ENCODE measurements at regions of chr1 and their contacts with region 1.

Region 1: DNA sequence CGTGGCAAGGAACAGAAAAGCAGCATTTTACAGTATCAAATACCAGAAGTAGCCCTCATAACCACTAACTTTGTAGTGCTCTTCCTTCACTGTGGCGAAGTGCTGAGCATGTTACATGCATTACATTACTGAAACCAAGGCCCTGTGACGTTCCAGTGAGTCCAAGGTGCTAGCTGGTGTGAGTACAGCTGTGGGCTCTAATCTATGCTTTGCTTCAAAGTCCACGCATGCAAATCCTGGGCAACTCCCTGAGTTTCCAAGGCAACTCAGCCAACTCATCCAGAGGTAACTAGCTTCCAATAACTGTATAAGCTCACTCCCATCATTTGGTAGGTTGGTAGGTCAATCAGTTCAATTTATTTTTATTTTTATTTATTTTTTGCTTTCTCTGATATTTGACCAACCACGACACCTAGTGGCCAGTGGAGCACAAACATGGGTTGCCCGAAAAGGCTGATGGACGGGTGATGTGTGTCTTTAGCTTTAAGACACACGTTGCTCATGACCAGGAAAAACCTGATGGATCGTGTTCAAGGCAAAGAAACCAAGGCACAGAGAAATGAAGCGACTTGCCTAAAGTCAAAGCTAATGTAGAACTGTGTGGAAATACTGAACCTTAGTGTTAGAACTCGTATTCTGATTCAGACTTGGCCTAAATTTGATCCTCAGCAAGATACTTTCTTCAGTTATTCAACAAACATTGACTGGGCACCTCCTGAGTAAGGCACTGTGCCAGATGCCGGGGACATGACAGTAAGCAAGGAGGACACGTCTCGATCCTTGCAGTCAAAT is 73.0 kb downstream of the GNG12 start:
- DNase-seq: peak; percentile 75
- ATAC-seq: peak; percentile 79
- H3K4me3 Mint-ChIP-seq: no peak overlapping the region
- H3K27ac Mint-ChIP-seq: no peak overlapping the region
- H3K4me1 Mint-ChIP-seq: no peaks in the 10 kb centered on the region
- H3K27me3 Mint-ChIP-seq: peaks cover 23% of the 10 kb centered on the region
- CTCF ChIP-seq: peak; percentile 92

Region 2: DNA sequence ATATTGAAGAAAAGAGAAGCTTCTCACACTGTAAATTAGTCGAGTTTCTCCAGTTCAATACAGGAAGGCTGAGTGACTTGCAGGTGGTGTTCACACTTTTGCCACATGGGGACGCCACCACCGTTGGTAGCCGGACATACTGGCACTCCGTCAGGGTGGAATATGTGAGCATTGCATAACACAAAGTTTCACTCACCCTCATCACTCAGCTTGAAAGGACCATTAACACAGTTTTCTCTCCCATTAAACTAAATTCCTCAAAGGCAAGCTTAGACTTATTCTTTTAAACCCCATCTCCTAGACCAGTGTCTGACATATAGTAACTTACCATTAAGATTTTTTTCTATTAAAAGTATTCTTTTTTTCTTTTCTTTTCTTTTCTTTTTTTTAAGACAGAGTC is 224.8 kb before region 1 on chr1:
- CTCF ChIA-PET with region 1: interaction called, 81 read pairs
- POLR2A ChIA-PET with region 1: no interaction called
- intact Hi-C with region 1: loop called (anchors 2 kb)
- DNase-seq: peak; percentile 81
- ATAC-seq: peak; percentile 82
- H3K4me3 Mint-ChIP-seq: no peak overlapping the region
- H3K27ac Mint-ChIP-seq: no peak overlapping the region
- H3K4me1 Mint-ChIP-seq: peaks cover 10% of the 10 kb centered on the region
- H3K27me3 Mint-ChIP-seq: peaks cover 2% of the 10 kb centered on the region
- CTCF ChIP-seq: peak; percentile 85

Region 3: DNA sequence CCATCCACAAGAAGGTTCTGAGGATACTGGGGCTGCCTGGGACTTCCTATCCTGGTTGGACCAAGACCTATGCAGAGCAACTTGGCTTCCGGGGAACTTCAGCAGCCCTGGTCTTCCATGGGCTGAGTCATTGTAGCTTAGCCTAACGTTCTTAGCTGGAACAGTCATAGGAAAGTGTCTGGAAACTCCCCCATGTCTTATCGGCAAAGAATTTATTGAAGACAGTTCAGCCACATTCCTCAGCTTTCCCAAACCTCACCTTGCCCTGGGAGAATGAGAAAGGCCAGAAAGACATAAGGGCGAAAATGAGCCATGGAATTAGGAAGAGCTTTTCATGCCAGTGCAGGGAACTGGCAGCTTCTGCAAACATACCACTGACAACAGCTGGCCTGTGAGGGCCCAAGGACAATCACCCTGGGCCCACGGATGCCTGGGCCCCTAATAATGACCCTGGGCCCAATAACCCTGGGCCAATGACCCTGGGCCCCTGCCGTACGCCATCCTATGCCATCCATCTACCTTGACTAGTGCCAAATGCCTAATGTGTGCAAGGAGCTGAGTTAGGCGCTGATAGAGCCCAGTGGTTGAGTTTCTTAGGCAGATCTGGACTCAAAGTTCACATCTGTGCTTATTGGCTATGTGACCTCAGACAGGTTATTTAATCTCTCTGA is 189.6 kb before region 1 on chr1:
- CTCF ChIA-PET with region 1: interaction called, 44 read pairs
- POLR2A ChIA-PET with region 1: no interaction called
- intact Hi-C with region 1: no loop called
- DNase-seq: no peak
- ATAC-seq: no peak
- H3K4me3 Mint-ChIP-seq: no peak overlapping the region
- H3K27ac Mint-ChIP-seq: no peak overlapping the region
- H3K4me1 Mint-ChIP-seq: no peaks in the 10 kb centered on the region
- H3K27me3 Mint-ChIP-seq: no peaks in the 10 kb centered on the region
- CTCF ChIP-seq: no peak

Region 4: DNA sequence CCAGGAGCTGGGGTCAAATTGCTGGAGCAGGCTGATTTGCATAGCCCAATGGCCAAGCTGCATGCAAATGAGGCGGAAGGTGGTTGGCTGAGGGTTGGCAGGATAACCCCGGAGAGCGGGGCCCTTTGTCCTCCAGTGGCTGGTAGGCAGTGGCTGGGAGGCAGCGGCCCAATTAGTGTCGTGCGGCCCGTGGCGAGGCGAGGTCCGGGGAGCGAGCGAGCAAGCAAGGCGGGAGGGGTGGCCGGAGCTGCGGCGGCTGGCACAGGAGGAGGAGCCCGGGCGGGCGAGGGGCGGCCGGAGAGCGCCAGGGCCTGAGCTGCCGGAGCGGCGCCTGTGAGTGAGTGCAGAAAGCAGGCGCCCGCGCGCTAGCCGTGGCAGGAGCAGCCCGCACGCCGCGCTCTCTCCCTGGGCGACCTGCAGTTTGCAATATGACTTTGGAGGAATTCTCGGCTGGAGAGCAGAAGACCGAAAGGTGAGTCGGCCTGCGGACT is 75.1 kb before region 1 on chr1 and contains the start of gene GADD45A:
- CTCF ChIA-PET with region 1: interaction called, 30 read pairs
- POLR2A ChIA-PET with region 1: interaction called, 4 read pairs
- intact Hi-C with region 1: no loop called
- DNase-seq: peak; percentile 97
- ATAC-seq: peak; percentile 85
- H3K4me3 Mint-ChIP-seq: peak within 1 kb of the TSS; percentile 90
- H3K27ac Mint-ChIP-seq: peak within 1 kb of the TSS; percentile 97
- H3K4me1 Mint-ChIP-seq: peaks cover 49% of the 10 kb centered on the region
- H3K27me3 Mint-ChIP-seq: no peaks in the 10 kb centered on the region
- CTCF ChIP-seq: no peak
- total RNA-seq, gene GADD45A: 33.5 to 34.3 TPM

Region 5: GRCh38 chr1:67749844-67750689 is 10.2 kb before region 1 on chr1:
- CTCF ChIA-PET with region 1: interaction called, 24 read pairs
- POLR2A ChIA-PET with region 1: no interaction called
- intact Hi-C with region 1: no loop called
- DNase-seq: no peak
- ATAC-seq: peak; percentile 45
- H3K4me3 Mint-ChIP-seq: no peak overlapping the region
- H3K27ac Mint-ChIP-seq: no peak overlapping the region
- H3K4me1 Mint-ChIP-seq: peaks cover 28% of the 10 kb centered on the region
- H3K27me3 Mint-ChIP-seq: peaks cover 10% of the 10 kb centered on the region
- CTCF ChIP-seq: no peak

Region 6: DNA sequence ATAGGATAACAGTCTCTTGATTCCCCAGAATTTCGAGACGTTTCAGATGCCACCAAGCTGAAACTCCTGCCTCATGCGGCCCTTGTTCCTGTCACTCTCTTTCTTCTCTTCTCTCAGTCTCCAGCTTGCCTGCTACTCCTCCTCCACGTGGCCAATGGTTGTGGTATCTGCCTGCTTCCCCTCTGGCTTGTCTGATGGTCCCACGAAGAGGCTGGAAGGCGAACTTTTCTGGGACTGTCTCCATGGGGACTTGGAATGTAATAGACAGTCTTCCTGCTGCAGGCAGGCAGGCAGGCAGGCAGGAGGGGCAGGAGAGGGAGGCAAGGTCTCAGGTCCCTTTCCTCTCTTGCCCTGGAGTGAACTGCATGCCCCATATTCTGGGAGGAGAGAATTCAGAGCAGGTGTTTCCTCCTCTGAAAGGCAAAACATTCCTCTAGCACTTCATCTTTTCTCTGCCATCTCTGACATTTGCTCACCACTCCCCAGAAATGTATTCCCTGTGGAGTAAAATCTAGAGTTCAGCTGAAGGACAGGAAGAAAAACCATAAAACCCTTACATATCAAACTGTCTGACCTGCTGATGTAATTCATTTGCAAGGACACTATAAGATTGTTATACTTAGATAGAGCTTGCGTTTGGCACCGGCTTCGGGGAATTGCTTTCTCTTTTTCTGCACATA is 137.2 kb after region 1 on chr1:
- CTCF ChIA-PET with region 1: no interaction called
- POLR2A ChIA-PET with region 1: no interaction called
- intact Hi-C with region 1: no loop called
- DNase-seq: no peak
- ATAC-seq: no peak
- H3K4me3 Mint-ChIP-seq: no peak overlapping the region
- H3K27ac Mint-ChIP-seq: no peak overlapping the region
- H3K4me1 Mint-ChIP-seq: no peaks in the 10 kb centered on the region
- H3K27me3 Mint-ChIP-seq: peaks cover 17% of the 10 kb centered on the region
- CTCF ChIP-seq: no peak

Measured in activated CD8-positive, alpha-beta T cell treated with anti-CD3 and anti-CD28 coated beads for 36 hours (primary cell).